PC-9 (cell line): ENCODE measurements at regions of chr3 and their contacts with region 1.

Region 1: DNA sequence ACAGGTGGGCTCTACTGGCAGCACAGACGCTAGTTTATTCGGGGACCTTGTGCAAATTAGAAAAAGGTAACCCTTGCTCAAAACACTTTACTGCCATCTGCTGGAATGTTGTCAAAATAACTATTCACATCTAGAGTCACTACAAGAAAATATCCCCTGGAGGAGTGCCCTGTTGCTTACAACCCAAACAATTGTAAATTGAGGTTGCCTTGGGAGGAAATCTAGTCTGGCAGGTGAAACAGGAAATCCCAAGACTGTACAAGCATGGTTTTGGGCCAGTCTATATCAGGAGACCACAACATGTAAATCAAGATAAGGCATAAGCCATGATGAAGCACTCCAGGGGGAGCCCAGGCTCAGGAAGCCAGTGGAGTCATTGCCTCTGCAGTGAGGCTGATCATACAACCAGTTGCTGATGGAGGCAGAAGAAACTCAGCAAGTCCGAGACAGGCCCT is 136.8 kb upstream of the ACP3 start:
- DNase-seq: peak; percentile 45 to 84
- H3K4me3 ChIP-seq: no peak overlapping the region
- H3K27ac ChIP-seq: no peak overlapping the region; the same call in 1 of the 2 replicates
- H3K4me1 ChIP-seq: peaks cover 10% of the 10 kb centered on the region; the same call in 1 of the 2 replicates
- H3K27me3 ChIP-seq: no peaks in the 10 kb centered on the region
- CTCF ChIP-seq: peak; percentile 80

Region 2: GRCh38 chr3:131033480-131034080 is 1146.8 kb before region 1 on chr3:
- CTCF ChIA-PET with region 1: no interaction called
- POLR2A ChIA-PET with region 1: no interaction called
- intact Hi-C with region 1: loop called (anchors 10 kb)
- DNase-seq: peak; percentile 9 to 51
- H3K4me3 ChIP-seq: no peak overlapping the region
- H3K27ac ChIP-seq: no peak overlapping the region
- H3K4me1 ChIP-seq: no peaks in the 10 kb centered on the region
- H3K27me3 ChIP-seq: no peaks in the 10 kb centered on the region
- CTCF ChIP-seq: peak; percentile 86

Region 3: GRCh38 chr3:131794766-131795388 is 385.5 kb before region 1 on chr3:
- CTCF ChIA-PET with region 1: no interaction called
- POLR2A ChIA-PET with region 1: no interaction called
- intact Hi-C with region 1: loop called (anchors 2 kb)
- DNase-seq: peak; percentile 32 to 44
- H3K4me3 ChIP-seq: no peak overlapping the region
- H3K27ac ChIP-seq: no peak overlapping the region
- H3K4me1 ChIP-seq: peaks cover 8% of the 10 kb centered on the region
- H3K27me3 ChIP-seq: no peaks in the 10 kb centered on the region
- CTCF ChIP-seq: peak; percentile 87

Region 4: DNA sequence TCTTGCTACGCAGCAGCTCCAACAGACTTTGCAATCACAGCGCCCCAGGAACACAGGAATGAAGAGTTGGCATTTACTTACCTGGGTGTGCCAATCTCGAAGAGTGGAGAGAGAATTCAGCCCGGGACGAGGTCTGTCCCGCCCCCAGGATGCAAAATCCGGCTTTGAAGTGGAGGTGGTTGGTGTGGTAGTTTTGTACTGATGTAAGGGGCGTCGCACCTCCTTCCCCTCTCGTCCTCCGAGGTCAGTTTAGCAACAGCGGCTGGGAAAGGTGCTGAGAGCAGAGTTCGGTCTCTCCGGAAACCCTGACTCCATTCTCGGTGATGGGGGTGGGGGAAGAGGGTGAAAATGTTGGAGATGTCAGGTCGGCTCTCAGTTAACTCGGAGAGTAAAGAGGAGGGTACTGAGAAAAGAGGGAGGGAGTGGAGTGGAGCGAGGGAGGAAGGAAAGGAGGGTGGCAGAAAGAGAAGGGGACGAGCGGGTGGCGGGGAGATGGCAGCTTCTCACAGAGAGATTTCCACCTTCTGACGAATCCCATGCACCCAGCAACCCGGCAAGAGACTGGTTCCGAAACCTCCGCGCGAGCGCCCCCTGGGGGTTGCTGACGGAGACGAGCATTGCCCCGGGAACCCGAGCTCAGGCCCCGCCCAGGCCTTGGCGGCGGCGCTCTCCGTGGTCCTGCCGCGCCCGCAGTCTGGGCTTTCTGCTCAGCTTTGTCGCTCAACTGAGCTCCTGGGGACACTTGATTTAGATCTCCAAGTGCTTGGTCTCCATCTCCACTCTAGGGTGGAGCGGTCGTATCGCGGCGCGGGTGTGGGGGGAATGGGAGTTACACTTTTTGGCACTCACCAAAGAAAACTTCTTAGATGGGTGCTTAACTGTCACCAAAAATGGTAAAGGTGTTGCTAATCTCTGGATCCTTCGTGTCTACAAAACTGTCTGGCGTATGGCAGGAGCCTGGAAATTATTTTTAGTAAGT is 145.6 kb before region 1 on chr3 and contains the start of gene CPNE4:
- CTCF ChIA-PET with region 1: interaction called, 6 read pairs
- POLR2A ChIA-PET with region 1: no interaction called
- intact Hi-C with region 1: loop called (anchors 1 kb)
- DNase-seq: peak; percentile 71 to 89
- H3K4me3 ChIP-seq: peak within 1 kb of the TSS; percentile 52
- H3K27ac ChIP-seq: no peak within 1 kb of the TSS
- H3K4me1 ChIP-seq: no peaks in the 10 kb centered on the region
- H3K27me3 ChIP-seq: no peaks in the 10 kb centered on the region
- CTCF ChIP-seq: peak; percentile 89
- total RNA-seq, gene CPNE4: 0.10 and 0.22 TPM in 2 replicates

Region 5: GRCh38 chr3:132135628-132136333 is 44.6 kb before region 1 on chr3:
- CTCF ChIA-PET with region 1: interaction called, 3 read pairs
- POLR2A ChIA-PET with region 1: no interaction called
- intact Hi-C with region 1: loop called (anchors 5 kb)
- DNase-seq: peak; percentile 71 to 97
- H3K4me3 ChIP-seq: peak overlapping the region; percentile 52
- H3K27ac ChIP-seq: peak overlapping the region; percentile 100
- H3K4me1 ChIP-seq: peaks cover 50% of the 10 kb centered on the region
- H3K27me3 ChIP-seq: no peaks in the 10 kb centered on the region
- CTCF ChIP-seq: no peak

Region 6: GRCh38 chr3:132399054-132399929 is 218.9 kb after region 1 on chr3:
- CTCF ChIA-PET with region 1: no interaction called
- POLR2A ChIA-PET with region 1: no interaction called
- intact Hi-C with region 1: loop called (anchors 1 kb)
- DNase-seq: peak; percentile 42 to 43
- H3K4me3 ChIP-seq: no peak overlapping the region
- H3K27ac ChIP-seq: no peak overlapping the region
- H3K4me1 ChIP-seq: no peaks in the 10 kb centered on the region
- H3K27me3 ChIP-seq: no peaks in the 10 kb centered on the region
- CTCF ChIP-seq: peak; percentile 91